GM13977 (cell line): ENCODE measurements at regions of chr22 and their contacts with region 1.

Region 1: DNA sequence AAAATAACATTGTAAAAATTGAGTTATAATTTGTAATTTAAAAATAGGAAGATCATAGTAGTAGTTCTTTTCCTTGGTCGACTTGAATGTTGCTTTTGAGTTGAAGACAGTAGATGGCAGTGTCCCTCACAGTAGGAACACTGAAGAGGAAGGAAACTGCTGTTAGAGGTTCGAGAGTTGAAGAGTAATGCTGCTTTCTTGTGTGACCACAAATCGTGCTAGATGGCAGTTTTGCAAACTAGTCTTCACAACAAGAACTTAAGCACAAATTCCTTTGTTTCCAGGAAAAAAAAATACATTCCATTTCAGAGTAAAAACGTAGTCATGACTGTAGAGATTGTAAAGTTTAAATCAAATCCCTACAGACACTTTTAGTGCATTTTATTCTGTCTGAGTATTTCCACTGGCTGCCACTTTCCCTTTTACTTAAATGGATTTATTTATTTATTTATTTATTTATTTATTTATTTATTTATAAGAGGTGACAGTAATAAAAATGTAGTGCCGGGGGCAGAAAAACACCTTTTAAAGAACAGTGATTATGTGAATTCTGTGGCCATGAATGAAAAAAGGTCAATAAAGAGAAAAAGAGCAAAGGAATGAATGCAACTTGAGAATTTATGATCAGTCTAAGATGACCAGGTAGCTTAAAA is 54.6 kb downstream of the SPECC1L start:
- DNase-seq: peak; percentile 80
- CTCF ChIP-seq: peak; percentile 63

Region 2: GRCh38 chr22:24525416-24526037 is 200.3 kb after region 1 on chr22:
- in situ Hi-C with region 1: loop called (anchors 10 kb)
- DNase-seq: peak; percentile 81
- CTCF ChIP-seq: peak; percentile 91